GM12878 (cell line): ENCODE measurements at regions of chr11 and their contacts with region 1.

Region 1: GRCh38 chr11:2382936-2383851 is 6.1 kb downstream of the CD81 start:
- DNase-seq: no peak
- ATAC-seq: peak; percentile 13
- H3K4me3 ChIP-seq: peak overlapping the region; percentile 45; the same call in 1 of the 2 replicates
- H3K27ac ChIP-seq: peak overlapping the region; percentile 62
- H3K4me1 ChIP-seq: peaks cover 80% of the 10 kb centered on the region
- H3K27me3 ChIP-seq: no peaks in the 10 kb centered on the region
- CTCF ChIP-seq: 0 out of 6 replicates have a peak, but pooled peaks of 1 of the 3 experiments have one; percentile 7
- EP300 ChIP-seq: no peak
- POLR2A ChIP-seq: no peak; the same call in 1 of the 2 replicates
- RAD21 ChIP-seq: no peak

Region 2: GRCh38 chr11:2305140-2305840 is 77.9 kb before region 1 on chr11:
- CTCF ChIA-PET with region 1: interaction called, 13 read pairs
- POLR2A ChIA-PET with region 1: no interaction called
- RAD21 ChIA-PET with region 1: interaction called, 8 read pairs
- SMC1A ChIA-PET with region 1: interaction called, 4 read pairs
- in situ Hi-C with region 1: no loop called
- intact Hi-C with region 1: no loop called
- DNase-seq: peak; percentile 4
- ATAC-seq: peak; percentile 92
- H3K4me3 ChIP-seq: no peak overlapping the region
- H3K27ac ChIP-seq: no peak overlapping the region
- H3K4me1 ChIP-seq: no peaks in the 10 kb centered on the region
- H3K27me3 ChIP-seq: no peaks in the 10 kb centered on the region; a peak in 1 of 4 replicates
- CTCF ChIP-seq: peak; percentile 76 to 93 (median 84)
- EP300 ChIP-seq: no peak
- POLR2A ChIP-seq: no peak
- RAD21 ChIP-seq: peak; percentile 87

Region 3: GRCh38 chr11:2428322-2428795 is 45.2 kb after region 1 on chr11:
- CTCF ChIA-PET with region 1: no interaction called
- POLR2A ChIA-PET with region 1: no interaction called
- RAD21 ChIA-PET with region 1: no interaction called
- SMC1A ChIA-PET with region 1: no interaction called
- in situ Hi-C with region 1: no loop called
- intact Hi-C with region 1: no loop called
- DNase-seq: no peak
- ATAC-seq: peak; percentile 92
- H3K4me3 ChIP-seq: no peak overlapping the region
- H3K27ac ChIP-seq: no peak overlapping the region
- H3K4me1 ChIP-seq: no peaks in the 10 kb centered on the region
- H3K27me3 ChIP-seq: no peaks in the 10 kb centered on the region
- CTCF ChIP-seq: peak; percentile 81 to 92 (median 87)
- EP300 ChIP-seq: no peak
- POLR2A ChIP-seq: no peak
- RAD21 ChIP-seq: peak; percentile 98